ENCODE measurements at regions of chr4 and their contacts with region 1.

Region 1: DNA sequence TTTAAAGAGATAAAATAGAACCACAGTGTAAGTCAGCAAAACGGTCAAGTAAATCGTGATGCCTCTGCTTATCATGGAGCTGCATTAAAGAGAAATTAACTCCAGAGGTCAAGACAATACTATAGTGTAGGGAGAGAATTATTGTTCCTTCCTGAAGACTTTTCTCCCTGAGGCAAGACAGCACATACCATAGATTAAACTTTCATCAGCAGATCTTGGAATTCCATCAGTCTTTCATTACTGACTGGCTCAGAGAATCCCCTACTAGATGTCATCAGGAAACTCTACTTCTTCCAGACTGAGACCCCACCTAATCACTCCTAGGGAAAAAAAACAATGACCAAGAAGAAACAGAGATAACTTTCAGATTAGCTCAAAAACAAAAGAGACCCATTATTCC is 131.3 kb downstream of the NSUN7 start:
- DNase-seq: no peak
- H3K4me3 ChIP-seq: no peak overlapping the region
- H3K27me3 ChIP-seq: no peaks in the 10 kb centered on the region
- CTCF ChIP-seq: no peak

Region 2: GRCh38 chr4:40857956-40858355 is 23.1 kb before region 1 on chr4:
- CTCF ChIA-PET with region 1: no interaction called
- POLR2A ChIA-PET with region 1: interaction called, 15 read pairs
- DNase-seq: no peak
- H3K4me3 ChIP-seq: no peak overlapping the region
- H3K27me3 ChIP-seq: no peaks in the 10 kb centered on the region
- CTCF ChIP-seq: no peak

Measured in BJ (cell line).